ENCODE measurements at regions of chr1 and their contacts with region 1.

Region 1: DNA sequence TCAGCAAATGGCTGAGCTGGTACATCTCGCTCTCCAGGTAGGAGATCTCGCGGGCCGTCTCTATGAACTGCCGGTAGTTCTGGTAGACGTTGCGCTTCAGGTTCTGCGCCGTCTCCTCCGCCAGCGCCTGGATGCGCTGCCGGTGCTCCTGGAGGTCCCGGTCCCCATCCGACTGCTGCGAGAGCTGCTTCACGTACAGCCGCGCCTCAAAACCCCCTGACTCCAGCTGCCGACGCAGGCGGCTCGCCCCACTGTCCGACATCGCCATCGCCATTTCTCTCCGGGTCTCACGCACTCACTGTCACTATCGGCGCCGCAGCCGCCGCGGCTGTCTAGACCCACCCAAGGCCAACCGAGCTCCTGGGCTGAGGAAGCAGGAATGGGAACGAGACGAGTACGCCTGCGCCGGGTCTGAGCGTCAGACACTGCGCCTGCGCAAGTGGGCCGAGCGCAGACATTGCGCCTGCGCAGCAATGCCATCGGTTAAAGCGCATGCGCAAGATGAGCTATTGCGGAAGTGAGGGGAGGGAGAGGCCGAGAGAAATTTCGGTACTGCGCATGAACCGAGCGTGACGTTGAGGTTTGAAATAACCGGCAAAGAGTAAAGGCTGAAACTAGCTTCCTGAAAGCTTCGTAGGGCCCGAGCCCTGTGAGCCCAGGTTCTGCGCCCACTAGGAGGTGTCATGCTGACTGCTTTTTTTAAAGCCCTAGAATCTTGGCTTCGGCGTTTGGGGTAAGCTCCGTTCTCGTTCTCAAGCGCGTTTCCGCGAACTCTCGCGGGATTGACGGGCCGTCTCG is at the start of gene EXOC8:
- H3K4me3 ChIP-seq: peak within 1 kb of the TSS; percentile 68
- H3K27ac ChIP-seq: peak within 1 kb of the TSS; percentile 83
- H3K4me1 ChIP-seq: peaks cover 9% of the 10 kb centered on the region
- CTCF ChIP-seq: peak; percentile 63; the same call in 1 of the 2 replicates

Region 2: GRCh38 chr1:231240883-231241735 is 96.6 kb before region 1 on chr1 and contains the start of gene GNPAT:
- CTCF ChIA-PET with region 1: no interaction called
- POLR2A ChIA-PET with region 1: interaction called, 17 read pairs
- H3K4me3 ChIP-seq: peak within 1 kb of the TSS; percentile 62
- H3K27ac ChIP-seq: peak within 1 kb of the TSS; percentile 84
- H3K4me1 ChIP-seq: peaks cover 15% of the 10 kb centered on the region
- CTCF ChIP-seq: peak; percentile 34; the same call in 1 of the 2 replicates

Region 3: DNA sequence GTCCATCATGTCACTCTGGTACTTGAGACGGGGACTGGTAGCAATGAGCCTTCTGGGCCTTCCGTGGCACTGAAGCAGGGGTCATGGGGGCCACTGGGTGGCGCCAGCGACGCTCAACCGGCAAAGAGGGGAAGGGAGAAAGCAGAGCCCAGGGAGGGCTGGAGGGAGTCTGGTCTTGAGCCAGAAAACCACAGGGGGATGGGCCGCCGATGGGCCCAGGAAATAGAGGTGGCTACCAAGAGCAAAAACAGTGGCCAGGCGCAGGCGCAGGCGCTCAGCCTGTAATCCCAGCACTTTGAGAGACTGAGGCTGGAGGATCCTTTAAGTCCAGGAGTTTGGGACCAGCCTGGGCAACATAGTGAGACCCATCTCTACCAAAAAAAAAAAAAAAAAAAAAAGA is 21.8 kb before region 1 on chr1:
- CTCF ChIA-PET with region 1: interaction called, 14 read pairs
- POLR2A ChIA-PET with region 1: interaction called, 16 read pairs
- H3K4me3 ChIP-seq: no peak overlapping the region
- H3K27ac ChIP-seq: no peak overlapping the region
- H3K4me1 ChIP-seq: no peaks in the 10 kb centered on the region
- CTCF ChIP-seq: peak; percentile 81

Region 4: GRCh38 chr1:231348442-231348841 is 10.8 kb after region 1 on chr1:
- CTCF ChIA-PET with region 1: no interaction called
- POLR2A ChIA-PET with region 1: interaction called, 14 read pairs
- H3K4me3 ChIP-seq: no peak overlapping the region
- H3K27ac ChIP-seq: no peak overlapping the region
- H3K4me1 ChIP-seq: no peaks in the 10 kb centered on the region
- CTCF ChIP-seq: no peak

Region 5: DNA sequence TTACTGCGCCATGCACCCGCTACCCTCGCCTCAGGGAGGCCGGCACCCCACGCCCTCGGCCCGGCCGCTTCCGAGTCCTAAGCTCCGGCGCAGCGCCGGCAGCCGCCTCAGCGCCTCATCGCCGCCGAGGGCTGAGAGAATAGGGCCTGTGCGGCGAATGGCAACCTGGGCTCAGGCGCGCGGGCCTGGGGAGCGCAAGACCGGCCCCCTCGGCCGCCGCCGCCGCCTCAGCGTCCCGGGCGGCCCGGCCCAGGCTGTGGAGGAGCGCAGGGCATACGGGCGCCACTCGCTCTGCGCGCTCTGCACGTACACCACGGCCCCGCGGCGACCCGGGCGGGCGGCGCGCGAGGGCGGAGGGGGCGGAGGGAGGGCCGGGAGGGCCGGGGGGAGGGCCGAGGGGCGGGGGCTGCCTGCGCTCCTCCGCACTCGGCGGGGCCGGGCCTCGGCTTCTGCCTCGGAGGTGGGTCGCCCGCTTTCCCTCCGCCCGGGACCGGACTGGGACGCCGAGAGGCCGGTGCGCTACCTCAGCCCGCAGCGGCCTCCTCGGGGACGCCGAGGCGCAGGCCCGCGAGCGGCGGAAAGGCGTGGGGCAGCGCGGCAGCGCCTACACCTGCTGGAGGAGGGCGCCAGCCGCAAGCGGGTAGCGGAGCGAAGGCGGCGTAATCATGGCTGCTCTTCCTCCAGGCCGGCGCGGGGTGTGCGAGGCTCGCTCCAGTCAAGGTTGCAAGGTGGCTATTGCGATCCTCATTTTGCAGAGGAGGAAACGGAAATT is 84.5 kb after region 1 on chr1 and contains the start of gene EGLN1:
- CTCF ChIA-PET with region 1: no interaction called
- POLR2A ChIA-PET with region 1: interaction called, 21 read pairs
- H3K4me3 ChIP-seq: peak within 1 kb of the TSS; percentile 97
- H3K27ac ChIP-seq: peak within 1 kb of the TSS; percentile 98
- H3K4me1 ChIP-seq: peaks cover 24% of the 10 kb centered on the region
- CTCF ChIP-seq: peak; percentile 99